MCF 10A (cell line): ENCODE measurements at regions of chr2 and their contacts with region 1.

Region 1: DNA sequence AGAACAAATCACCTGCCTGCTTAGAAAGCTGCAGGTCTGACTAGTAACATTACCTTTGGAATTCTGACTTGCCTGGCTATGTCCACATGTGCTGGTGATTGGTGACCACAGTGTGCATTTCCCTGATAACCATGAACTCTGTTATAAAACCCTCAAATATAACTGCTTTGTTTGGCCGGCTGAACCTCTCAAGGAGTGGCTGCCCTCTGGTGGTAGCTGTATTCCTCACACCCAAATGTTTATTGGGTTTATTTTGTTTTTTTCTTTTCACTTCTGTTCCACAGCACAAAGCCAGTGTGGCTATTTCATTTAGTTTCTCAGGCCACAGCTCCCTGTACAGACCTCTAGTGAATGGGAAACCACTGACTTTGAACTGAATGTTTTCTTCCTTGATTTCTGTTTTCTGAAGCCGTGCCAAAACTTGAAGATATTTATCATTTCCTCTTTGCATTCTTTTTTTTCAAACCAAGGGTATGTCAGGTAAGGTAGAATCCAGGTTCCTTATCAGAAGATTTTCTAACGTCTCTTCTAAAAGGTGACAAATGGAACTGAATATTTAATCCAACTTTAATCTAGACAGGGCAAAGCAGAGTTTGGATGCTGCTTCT is 549.0 kb upstream of the VRK2 start:
- DNase-seq: peak; percentile 68
- H3K4me3 Mint-ChIP-seq: no peak overlapping the region
- H3K27ac Mint-ChIP-seq: no peak overlapping the region
- H3K4me1 Mint-ChIP-seq: no peaks in the 10 kb centered on the region
- H3K27me3 Mint-ChIP-seq: no peaks in the 10 kb centered on the region
- CTCF ChIP-seq: peak; percentile 82

Region 2: DNA sequence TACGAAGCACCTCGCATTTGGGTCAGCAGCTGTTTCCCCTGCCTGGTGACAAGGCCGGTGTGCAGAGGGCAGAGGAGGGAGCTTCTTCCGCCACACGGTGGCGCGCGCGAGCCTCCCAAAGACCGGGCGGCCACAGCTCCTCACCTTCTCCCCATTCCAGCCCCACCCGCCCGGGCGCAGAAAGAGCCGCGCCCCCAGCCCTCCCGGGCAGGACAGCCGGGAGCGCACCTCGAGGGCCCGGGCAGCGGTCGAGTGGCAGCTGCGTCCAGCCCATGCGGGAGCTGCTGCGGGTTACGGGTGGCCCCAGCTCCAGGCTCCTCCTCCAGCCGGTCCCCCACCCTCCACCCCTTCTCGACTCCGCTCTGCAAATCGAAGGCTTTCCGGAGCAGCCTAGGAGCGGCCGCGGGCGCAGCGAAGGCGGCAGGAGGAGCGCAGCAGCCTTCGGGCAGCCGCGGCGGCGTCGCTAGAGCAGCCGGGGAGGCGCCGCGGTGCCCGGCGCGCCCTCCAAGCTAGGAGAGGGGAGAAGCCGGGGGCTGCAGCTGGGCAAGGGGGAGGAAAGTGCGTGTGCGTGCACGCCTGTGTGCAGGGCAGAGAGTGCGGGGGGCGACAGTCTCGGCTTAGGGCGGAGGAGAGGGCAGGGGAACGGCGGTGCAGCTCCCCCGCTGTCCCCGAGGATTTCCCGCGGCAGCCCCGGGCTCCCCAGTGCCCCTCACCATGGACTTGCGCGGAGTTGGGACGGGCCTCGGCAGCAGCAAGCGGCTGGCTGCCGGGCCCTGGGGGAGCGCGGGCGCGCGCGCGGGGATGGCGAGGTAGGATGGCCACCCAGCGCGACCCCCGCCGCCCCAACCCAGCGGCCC is 1313.7 kb before region 1 on chr2 and contains the start of gene CCDC85A:
- CTCF ChIA-PET with region 1: interaction called, 16 read pairs
- POLR2A ChIA-PET with region 1: no interaction called
- intact Hi-C with region 1: loop called (anchors 1 kb)
- DNase-seq: peak; percentile 83
- H3K4me3 Mint-ChIP-seq: peak within 1 kb of the TSS; percentile 89
- H3K27ac Mint-ChIP-seq: no peak within 1 kb of the TSS
- H3K4me1 Mint-ChIP-seq: peaks cover 11% of the 10 kb centered on the region
- H3K27me3 Mint-ChIP-seq: no peaks in the 10 kb centered on the region
- CTCF ChIP-seq: peak; percentile 94
- total RNA-seq, gene CCDC85A: 0.16 and 0.20 TPM in 2 replicates

Region 3: GRCh38 chr2:56960581-56960980 is 537.0 kb before region 1 on chr2:
- CTCF ChIA-PET with region 1: interaction called, 3 read pairs
- POLR2A ChIA-PET with region 1: no interaction called
- intact Hi-C with region 1: loop called (anchors 10 kb)
- DNase-seq: no peak
- H3K4me3 Mint-ChIP-seq: no peak overlapping the region
- H3K27ac Mint-ChIP-seq: no peak overlapping the region
- H3K4me1 Mint-ChIP-seq: no peaks in the 10 kb centered on the region
- H3K27me3 Mint-ChIP-seq: no peaks in the 10 kb centered on the region
- CTCF ChIP-seq: no peak

Region 4: GRCh38 chr2:57376985-57377384 is 120.6 kb before region 1 on chr2:
- CTCF ChIA-PET with region 1: interaction called, 14 read pairs
- POLR2A ChIA-PET with region 1: interaction called, 3 read pairs
- intact Hi-C with region 1: loop called (anchors 1 kb)
- DNase-seq: peak; percentile 27
- H3K4me3 Mint-ChIP-seq: no peak overlapping the region
- H3K27ac Mint-ChIP-seq: no peak overlapping the region
- H3K4me1 Mint-ChIP-seq: peaks cover 10% of the 10 kb centered on the region
- H3K27me3 Mint-ChIP-seq: no peaks in the 10 kb centered on the region
- CTCF ChIP-seq: peak; percentile 25

Region 5: GRCh38 chr2:57509189-57509588 is 11.6 kb after region 1 on chr2:
- CTCF ChIA-PET with region 1: interaction called, 17 read pairs
- POLR2A ChIA-PET with region 1: no interaction called
- intact Hi-C with region 1: no loop called
- DNase-seq: no peak
- H3K4me3 Mint-ChIP-seq: no peak overlapping the region
- H3K27ac Mint-ChIP-seq: no peak overlapping the region
- H3K4me1 Mint-ChIP-seq: no peaks in the 10 kb centered on the region
- H3K27me3 Mint-ChIP-seq: no peaks in the 10 kb centered on the region
- CTCF ChIP-seq: no peak

Region 6: DNA sequence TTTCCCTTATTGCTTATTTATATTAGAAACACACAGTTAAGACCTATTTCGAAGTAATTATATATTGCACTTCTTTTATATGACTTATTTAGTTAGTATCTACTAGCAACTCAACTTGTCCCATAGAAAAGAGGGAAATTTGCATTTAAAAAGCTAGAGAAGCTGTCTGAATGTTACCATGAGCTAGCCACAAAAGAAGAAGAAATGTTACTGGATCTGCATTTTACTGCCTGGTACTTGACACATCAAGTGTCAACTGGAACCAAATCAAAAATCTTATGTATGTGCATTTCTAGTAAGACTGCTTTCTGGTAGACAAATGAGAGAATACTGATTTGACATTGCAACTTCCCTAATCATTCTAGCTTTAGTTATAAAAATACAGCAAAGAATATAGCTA is 124.4 kb after region 1 on chr2:
- CTCF ChIA-PET with region 1: no interaction called
- POLR2A ChIA-PET with region 1: no interaction called
- intact Hi-C with region 1: no loop called
- DNase-seq: no peak
- H3K4me3 Mint-ChIP-seq: no peak overlapping the region
- H3K27ac Mint-ChIP-seq: no peak overlapping the region
- H3K4me1 Mint-ChIP-seq: no peaks in the 10 kb centered on the region
- H3K27me3 Mint-ChIP-seq: no peaks in the 10 kb centered on the region
- CTCF ChIP-seq: no peak